PC-9 (cell line): ENCODE measurements at regions of chr3 and their contacts with region 1.

Region 1: DNA sequence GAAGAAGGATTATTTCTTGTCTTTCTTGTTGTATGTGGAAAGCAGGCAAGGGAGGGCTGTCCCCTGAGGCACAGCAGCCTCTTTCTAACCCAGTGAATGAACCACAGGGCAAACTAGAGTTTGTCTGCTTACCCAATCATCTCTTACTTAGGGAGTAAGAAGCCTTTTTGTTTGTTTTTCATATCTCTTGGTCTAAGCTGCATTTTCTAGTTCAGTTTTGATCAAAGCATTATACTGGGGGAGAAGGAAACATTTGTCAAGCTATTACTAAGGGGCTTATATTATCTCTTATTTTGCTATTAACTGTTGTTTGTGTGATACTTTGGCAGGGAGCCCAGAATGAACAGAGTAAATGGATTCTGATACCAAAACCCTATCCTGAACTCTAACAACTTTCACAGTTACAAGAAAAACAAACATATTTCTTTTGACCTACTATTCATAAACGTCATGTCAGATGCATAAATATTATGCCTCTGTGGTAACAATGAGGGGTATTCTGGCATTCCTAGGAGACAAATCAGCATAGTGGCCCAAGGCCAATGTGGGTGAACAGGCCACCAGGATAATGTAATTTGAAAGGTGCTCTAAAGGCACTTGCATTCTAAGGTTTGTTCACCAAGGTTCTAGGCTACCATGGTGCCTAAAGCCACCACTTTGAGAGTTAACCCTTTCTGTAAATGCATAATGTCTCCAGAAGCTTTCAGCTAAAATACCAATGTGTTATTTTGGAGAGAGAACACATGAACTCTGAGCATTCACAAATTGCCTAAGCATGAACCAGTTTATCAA is 271.6 kb upstream of the ZPLD1 start:
- DNase-seq: peak; percentile 84 to 100
- H3K4me3 ChIP-seq: peak overlapping the region; percentile 7; the same call in 1 of the 2 replicates
- H3K27ac ChIP-seq: peak overlapping the region; percentile 87
- H3K4me1 ChIP-seq: peaks cover 59% of the 10 kb centered on the region
- H3K27me3 ChIP-seq: no peaks in the 10 kb centered on the region
- CTCF ChIP-seq: no peak

Region 2: DNA sequence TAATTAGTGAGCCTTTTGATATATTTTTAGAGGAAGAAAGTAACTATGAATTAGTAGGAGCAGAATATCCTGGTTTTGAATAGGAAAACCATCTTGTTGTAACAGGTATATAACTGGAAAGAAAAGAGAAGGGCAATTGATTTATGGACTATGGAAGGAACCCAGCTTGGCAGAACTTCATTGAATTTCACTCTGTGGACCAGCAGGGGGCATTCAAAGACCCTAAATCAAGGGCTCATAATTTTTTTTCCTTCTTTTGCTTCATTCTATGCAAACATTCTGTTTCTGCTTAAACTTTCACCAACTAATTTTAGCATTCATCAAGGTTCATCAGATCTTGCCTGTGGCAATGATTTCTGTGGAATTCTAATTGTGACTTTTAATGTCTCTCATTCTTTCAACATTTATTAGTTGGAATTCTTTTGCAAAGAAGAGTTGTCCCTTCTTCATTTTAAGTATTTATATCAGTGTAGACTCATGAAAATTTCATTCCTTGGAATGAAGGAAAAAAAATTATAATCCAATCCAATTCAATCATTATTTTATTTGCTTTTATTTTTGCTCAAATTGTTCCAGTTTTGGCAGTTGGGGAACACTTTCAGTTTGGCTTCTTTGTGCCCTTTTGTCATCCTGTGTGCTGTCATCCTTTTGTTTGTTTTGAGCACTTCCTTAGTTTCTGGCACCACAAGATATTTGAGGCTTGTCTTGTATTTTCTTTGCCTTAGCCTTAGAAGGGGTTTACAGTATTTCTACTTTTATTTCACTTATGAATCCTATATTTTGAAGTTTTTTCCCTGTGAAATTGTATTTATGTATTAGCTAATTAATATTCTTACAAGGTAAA is 353.8 kb before region 1 on chr3:
- CTCF ChIA-PET with region 1: no interaction called
- POLR2A ChIA-PET with region 1: no interaction called
- intact Hi-C with region 1: loop called (anchors 1 kb)
- DNase-seq: peak in 1 of 2 experiments; percentile 28
- H3K4me3 ChIP-seq: no peak overlapping the region
- H3K27ac ChIP-seq: no peak overlapping the region
- H3K4me1 ChIP-seq: peaks cover 10% of the 10 kb centered on the region
- H3K27me3 ChIP-seq: no peaks in the 10 kb centered on the region
- CTCF ChIP-seq: peak; percentile 94

Region 3: DNA sequence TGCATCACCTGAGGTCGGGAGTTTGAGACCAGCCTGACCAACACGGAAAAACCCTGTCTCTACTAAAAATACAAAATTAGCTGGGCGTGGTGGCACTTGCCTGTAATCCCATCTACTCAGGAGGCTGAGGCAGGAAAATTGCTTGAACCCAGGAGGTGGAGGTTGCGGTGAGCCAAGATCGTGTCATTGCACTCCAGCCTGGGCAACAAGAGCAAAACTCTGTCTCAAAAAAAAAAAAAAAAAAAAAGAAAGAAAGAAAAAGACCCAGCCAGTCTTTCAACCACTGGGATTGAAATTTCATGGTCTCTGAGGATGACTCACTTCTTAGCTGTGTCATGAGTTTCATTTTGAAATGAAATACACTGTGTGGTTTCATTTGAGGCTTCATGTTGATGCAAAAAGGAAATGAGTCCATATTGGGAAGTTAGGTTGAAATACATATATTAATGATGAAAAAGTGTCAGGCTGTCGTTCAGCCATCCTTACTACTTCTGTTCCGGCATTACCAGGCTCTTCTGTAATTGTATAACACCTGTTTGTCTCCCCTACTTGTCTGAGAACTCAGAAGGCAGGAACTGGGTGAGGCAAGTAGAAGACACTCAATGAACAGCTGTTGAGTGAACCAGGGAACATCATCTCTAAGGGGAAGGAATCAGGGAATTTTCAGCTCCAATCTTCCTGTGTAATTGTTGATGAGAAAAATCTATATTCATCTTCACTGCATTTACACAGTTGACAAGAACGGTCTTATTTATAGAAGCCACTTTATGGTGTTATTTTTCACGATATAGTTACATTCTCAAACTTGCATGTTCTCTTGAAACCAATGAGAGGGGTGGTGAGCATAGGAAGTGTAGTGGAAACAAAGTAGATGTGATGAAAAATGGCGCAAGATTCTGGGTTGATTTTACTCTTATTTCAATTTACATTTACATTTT is 226.5 kb before region 1 on chr3:
- CTCF ChIA-PET with region 1: no interaction called
- POLR2A ChIA-PET with region 1: no interaction called
- intact Hi-C with region 1: loop called (anchors 2 kb)
- DNase-seq: peak in 1 of 2 experiments; percentile 77
- H3K4me3 ChIP-seq: no peak overlapping the region
- H3K27ac ChIP-seq: peak overlapping the region; percentile 75
- H3K4me1 ChIP-seq: peaks cover 16% of the 10 kb centered on the region
- H3K27me3 ChIP-seq: no peaks in the 10 kb centered on the region
- CTCF ChIP-seq: no peak

Region 4: DNA sequence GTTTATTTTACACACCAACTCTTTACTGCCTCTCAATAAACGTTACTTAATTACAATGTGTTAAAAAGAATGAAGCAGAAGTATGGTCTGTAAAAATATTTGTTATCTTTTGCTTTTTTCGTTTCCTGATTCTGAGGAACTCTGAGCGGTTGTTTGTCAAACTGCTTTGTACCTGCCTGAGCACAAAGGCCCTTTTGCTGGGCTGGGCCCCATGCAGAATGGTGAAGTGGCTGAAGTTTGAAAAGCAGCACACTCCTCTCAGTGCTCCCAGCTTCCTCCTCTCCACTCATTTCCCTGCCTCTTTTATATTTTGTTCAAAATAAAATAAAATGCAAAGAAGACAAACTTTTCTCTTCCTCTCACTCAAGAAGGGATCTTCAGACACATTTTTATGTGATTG is 84.4 kb before region 1 on chr3:
- CTCF ChIA-PET with region 1: no interaction called
- POLR2A ChIA-PET with region 1: interaction called, 4 read pairs
- intact Hi-C with region 1: loop called (anchors 1 kb)
- DNase-seq: peak in 1 of 2 experiments; percentile 27
- H3K4me3 ChIP-seq: 0 out of 2 replicates have a peak overlapping the region, but pooled peaks have one; percentile 3
- H3K27ac ChIP-seq: peak overlapping the region; percentile 39
- H3K4me1 ChIP-seq: peaks cover 20% of the 10 kb centered on the region
- H3K27me3 ChIP-seq: no peaks in the 10 kb centered on the region
- CTCF ChIP-seq: no peak

Region 5: GRCh38 chr3:102180291-102181039 is 17.2 kb after region 1 on chr3:
- CTCF ChIA-PET with region 1: no interaction called
- POLR2A ChIA-PET with region 1: interaction called, 16 read pairs
- intact Hi-C with region 1: loop called (anchors 1 kb)
- DNase-seq: no peak
- H3K4me3 ChIP-seq: no peak overlapping the region
- H3K27ac ChIP-seq: no peak overlapping the region
- H3K4me1 ChIP-seq: peaks cover 18% of the 10 kb centered on the region
- H3K27me3 ChIP-seq: no peaks in the 10 kb centered on the region
- CTCF ChIP-seq: no peak

Region 6: DNA sequence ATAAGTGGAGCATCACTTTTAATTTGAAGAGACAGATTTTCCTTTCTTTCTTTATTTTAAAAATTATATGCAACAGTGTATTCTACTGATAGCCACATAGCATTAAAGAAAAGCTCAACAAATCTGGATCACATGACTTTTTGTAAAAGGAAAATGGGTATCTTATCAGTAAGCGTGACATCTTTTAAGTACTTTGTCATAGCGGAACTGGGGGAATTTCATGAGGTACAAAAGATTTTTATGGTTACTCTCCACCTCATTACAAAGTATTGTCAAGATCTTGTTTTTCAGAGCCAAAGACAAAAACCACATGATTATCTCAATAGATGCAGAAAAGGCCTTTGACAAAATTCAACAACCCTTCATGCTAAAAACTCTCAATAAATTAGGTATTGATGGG is 51.9 kb after region 1 on chr3:
- CTCF ChIA-PET with region 1: no interaction called
- POLR2A ChIA-PET with region 1: no interaction called
- intact Hi-C with region 1: no loop called
- DNase-seq: no peak
- H3K4me3 ChIP-seq: no peak overlapping the region
- H3K27ac ChIP-seq: no peak overlapping the region
- H3K4me1 ChIP-seq: no peaks in the 10 kb centered on the region
- H3K27me3 ChIP-seq: no peaks in the 10 kb centered on the region
- CTCF ChIP-seq: no peak

Region 7: GRCh38 chr3:102525624-102526023 is 362.4 kb after region 1 on chr3:
- CTCF ChIA-PET with region 1: no interaction called
- POLR2A ChIA-PET with region 1: no interaction called
- intact Hi-C with region 1: no loop called
- DNase-seq: no peak
- H3K4me3 ChIP-seq: no peak overlapping the region
- H3K27ac ChIP-seq: no peak overlapping the region
- H3K4me1 ChIP-seq: peaks cover 13% of the 10 kb centered on the region
- H3K27me3 ChIP-seq: no peaks in the 10 kb centered on the region
- CTCF ChIP-seq: no peak